Naive thymus-derived CD4-positive, alpha-beta T cell (primary cell): ENCODE measurements at regions of chr15 and their contacts with region 1.

Region 1: DNA sequence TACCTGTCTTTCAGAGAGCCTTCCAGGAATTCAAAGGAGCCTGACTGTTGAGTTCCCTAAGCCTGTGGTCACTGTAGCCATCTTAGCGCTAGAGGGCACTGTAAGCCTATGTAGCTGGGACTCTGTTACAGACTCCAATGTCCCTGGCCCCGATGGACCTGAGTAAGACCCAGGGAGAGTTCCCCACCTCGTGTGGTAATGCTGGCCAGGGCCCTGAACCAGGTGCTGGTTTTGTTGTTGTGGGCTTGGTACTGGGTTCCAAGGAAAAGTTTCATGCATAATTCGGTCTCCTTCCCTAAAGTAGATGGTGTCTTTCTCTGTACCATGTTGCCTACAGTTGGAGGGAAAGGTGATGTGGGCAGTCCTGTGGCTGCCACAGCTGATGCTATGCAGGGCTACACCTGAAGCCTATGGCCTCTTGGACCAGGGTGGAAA is 32.4 kb downstream of the CDAN1 start:
- DNase-seq: peak in 8 of 9 donors; percentile 23 to 59 (median 53)
- ATAC-seq: peak; percentile 96
- H3K4me3 ChIP-seq: no peak overlapping the region
- H3K4me3 Mint-ChIP-seq: no peak overlapping the region
- H3K27ac ChIP-seq: no peak overlapping the region
- H3K27ac Mint-ChIP-seq: no peak overlapping the region
- H3K4me1 ChIP-seq: no peaks in the 10 kb centered on the region
- H3K4me1 Mint-ChIP-seq: peaks cover 0 to 10% (median 5%) of the 10 kb centered on the region in 7 donors
- H3K27me3 ChIP-seq: no peaks in the 10 kb centered on the region
- H3K27me3 Mint-ChIP-seq: no peaks in the 10 kb centered on the region

Region 2: DNA sequence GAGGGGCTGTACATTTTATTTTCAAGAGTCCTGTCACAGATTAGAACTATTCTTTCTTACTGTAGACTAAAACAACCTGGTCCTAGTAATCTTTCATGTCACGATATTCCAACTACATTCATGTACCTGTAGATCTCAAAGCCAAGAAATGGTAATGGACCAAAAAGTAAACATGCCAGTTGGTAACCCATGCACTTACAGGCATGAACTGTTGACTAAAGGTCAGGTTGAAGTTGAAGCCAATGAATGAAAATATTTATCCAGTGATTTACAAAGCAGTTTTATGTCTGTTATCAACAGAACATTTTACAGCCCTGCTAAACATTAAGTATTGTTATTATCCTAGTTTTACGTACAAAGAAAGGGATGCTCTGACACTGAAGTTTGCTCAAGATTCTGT is 181.2 kb before region 1 on chr15:
- CTCF ChIA-PET with region 1: no interaction called
- POLR2A ChIA-PET with region 1: no interaction called
- intact Hi-C with region 1: no loop called
- DNase-seq: no peak
- ATAC-seq: no peak
- H3K4me3 ChIP-seq: no peak overlapping the region
- H3K4me3 Mint-ChIP-seq: no peak overlapping the region
- H3K27ac ChIP-seq: no peak overlapping the region
- H3K27ac Mint-ChIP-seq: no peak overlapping the region
- H3K4me1 ChIP-seq: no peaks in the 10 kb centered on the region
- H3K4me1 Mint-ChIP-seq: peaks cover 0 to 2% (median 0%) of the 10 kb centered on the region in 7 donors
- H3K27me3 ChIP-seq: no peaks in the 10 kb centered on the region
- H3K27me3 Mint-ChIP-seq: no peaks in the 10 kb centered on the region

Region 3: DNA sequence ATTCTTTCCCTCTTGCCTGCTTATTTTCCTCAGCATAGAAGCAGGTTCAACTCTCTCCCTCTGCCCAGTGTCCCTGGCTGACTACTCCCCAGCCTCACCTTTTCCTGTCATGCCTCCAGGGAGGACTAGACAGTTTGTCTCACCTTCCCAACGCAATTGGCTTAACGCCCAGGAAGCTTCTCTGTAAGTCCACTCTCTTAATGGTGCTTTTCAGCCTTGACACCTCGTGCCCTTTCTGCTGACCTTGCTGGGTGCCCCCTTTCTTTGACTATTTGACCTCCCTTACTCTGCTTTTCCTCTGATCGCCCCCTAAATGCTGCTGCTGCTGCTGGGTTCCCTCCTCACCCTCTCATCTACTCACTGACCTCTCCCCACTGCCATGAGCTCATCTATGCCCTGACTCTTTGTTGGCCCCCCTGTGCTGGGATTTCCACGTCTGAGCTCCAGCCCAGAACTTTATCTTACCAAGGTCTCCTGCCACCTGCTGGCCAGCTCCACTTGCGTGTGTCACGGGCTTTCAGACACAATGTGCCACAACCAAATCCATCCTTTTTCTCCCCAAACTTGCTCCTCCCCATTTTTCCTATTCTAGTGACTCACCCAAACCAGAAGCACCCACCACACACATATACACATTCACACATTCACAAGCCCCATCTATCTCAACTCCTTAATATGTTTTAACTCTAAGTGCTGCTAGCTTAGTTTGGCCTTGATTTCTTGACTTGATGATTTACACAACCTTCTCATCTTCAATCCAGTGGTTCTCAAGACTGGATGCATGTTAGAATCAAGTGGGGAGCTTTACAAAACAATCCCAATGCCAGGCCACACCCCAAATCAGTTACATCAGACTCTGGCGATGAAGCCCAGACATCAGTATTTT is 499.8 kb after region 1 on chr15:
- CTCF ChIA-PET with region 1: no interaction called
- POLR2A ChIA-PET with region 1: no interaction called
- intact Hi-C with region 1: loop called in 1 of 2 experiments (anchors 5 kb)
- DNase-seq: peak in 7 of 9 donors; percentile 21 to 37 (median 29)
- ATAC-seq: peak; percentile 66
- H3K4me3 ChIP-seq: no peak overlapping the region
- H3K4me3 Mint-ChIP-seq: no peak overlapping the region
- H3K27ac ChIP-seq: no peak overlapping the region
- H3K27ac Mint-ChIP-seq: peak overlapping the region in 1 of 9 donors; percentile 66
- H3K4me1 ChIP-seq: no peaks in the 10 kb centered on the region
- H3K4me1 Mint-ChIP-seq: peaks cover 0 to 10% (median 5%) of the 10 kb centered on the region in 7 donors
- H3K27me3 ChIP-seq: no peaks in the 10 kb centered on the region
- H3K27me3 Mint-ChIP-seq: peaks cover 8 to 16% (median 13%) of the 10 kb centered on the region in 5 donors

Region 4: DNA sequence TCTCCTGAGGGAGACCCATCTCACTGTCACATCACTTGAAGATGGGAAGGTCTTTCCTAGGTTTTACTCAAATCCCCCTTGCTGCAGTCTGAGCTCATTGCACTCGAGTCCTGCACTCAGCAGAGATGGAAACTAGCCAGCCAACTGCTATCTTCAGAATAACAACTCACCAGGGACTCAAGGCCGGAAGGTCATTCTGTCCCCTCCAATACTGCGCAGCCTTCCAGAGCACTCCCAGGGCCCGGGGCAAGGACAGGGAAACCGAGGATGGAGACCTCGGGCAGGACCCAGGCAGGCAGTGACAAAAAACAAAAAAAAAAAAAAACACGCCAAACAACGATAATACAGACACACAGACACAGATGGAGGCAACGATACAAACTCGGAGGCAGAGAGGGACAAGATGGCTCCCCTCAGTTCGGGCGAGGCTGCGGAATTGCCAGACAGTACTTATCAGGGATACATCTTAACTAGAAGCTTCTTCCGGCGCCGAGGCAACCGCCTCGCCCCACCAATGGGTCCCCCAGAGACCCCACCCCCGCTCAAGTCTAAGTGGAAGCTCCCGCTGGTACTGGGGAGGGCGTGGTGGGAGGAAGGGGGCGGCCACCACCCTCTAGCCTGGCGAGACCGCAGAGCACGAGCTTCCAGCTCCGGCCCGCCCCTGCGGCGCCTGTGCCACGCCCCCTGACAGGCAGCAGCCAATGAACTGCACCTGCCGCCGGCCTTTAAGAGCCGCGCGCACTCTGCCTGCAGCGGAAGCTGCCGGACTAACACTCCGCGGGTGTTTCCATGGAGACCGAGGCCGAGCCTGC is 805.9 kb after region 1 on chr15:
- CTCF ChIA-PET with region 1: no interaction called
- POLR2A ChIA-PET with region 1: no interaction called
- intact Hi-C with region 1: no loop called
- DNase-seq: peak; percentile 91 to 96 (median 94)
- ATAC-seq: peak; percentile 97
- H3K4me3 ChIP-seq: peak overlapping the region; percentile 88
- H3K4me3 Mint-ChIP-seq: peak overlapping the region; percentile 89 to 100 (median 94)
- H3K27ac ChIP-seq: peak overlapping the region; percentile 76
- H3K27ac Mint-ChIP-seq: peak overlapping the region; percentile 92 to 99 (median 97)
- H3K4me1 ChIP-seq: peaks cover 14 to 17% of the 10 kb centered on the region in 2 donors
- H3K4me1 Mint-ChIP-seq: peaks cover 14 to 51% (median 28%) of the 10 kb centered on the region in 7 donors
- H3K27me3 ChIP-seq: no peaks in the 10 kb centered on the region
- H3K27me3 Mint-ChIP-seq: peaks cover 0 to 2% (median under 1%) of the 10 kb centered on the region in 5 donors